ENCODE measurements at regions of chr2 and their contacts with region 1.

Region 1: DNA sequence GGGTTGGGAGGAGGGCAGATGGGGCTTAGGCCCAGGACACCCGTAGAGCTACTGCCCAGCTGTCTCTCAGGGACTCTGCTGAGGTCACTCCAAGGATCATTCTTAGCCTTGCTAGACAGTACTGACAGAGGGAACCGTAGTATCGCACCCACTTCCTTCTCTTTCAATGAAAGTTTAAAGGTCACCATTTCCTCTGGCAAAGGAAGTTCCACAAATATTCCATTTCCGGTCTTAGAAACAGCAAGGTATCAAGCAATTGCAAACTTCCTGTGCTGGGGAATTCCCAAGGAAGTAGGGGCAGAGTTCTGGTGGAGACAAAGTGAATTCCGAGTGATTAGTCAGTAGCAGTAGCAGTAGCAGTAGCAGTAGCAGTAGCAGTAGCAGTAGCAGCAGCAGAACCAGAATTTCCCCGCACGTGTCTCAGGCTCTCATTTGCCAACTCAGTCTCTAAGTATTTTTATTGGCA is 24.7 kb downstream of the IL1B start:
- DNase-seq: no peak
- H3K4me3 ChIP-seq: no peak overlapping the region
- H3K27ac ChIP-seq: peak overlapping the region; percentile 63
- H3K4me1 ChIP-seq: peaks cover 27% of the 10 kb centered on the region
- H3K27me3 ChIP-seq: no peaks in the 10 kb centered on the region
- CTCF ChIP-seq: no peak

Region 2: DNA sequence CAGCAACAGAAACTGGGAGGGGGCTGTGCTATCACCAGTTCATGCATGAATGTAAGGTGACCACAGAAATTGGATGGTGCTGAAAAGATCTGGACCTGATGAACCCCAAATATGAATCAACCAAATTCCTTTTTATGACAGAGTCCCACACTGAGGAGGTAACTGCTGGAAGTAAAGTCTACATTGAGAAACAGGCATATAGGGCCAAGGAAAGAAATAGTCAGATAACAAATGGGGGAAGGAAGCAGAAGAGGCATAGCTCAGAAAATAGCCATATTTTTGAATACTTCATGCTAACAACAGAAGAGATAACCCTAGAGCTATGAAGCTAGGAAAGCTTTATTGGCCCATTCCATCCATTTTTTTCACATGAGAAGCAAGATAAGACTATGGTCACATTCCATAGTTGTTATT is 510.7 kb before region 1 on chr2:
- intact Hi-C with region 1: no loop called
- DNase-seq: no peak
- H3K4me3 ChIP-seq: no peak overlapping the region
- H3K27ac ChIP-seq: no peak overlapping the region
- H3K4me1 ChIP-seq: peaks cover 19% of the 10 kb centered on the region
- H3K27me3 ChIP-seq: no peaks in the 10 kb centered on the region
- CTCF ChIP-seq: no peak

Region 3: DNA sequence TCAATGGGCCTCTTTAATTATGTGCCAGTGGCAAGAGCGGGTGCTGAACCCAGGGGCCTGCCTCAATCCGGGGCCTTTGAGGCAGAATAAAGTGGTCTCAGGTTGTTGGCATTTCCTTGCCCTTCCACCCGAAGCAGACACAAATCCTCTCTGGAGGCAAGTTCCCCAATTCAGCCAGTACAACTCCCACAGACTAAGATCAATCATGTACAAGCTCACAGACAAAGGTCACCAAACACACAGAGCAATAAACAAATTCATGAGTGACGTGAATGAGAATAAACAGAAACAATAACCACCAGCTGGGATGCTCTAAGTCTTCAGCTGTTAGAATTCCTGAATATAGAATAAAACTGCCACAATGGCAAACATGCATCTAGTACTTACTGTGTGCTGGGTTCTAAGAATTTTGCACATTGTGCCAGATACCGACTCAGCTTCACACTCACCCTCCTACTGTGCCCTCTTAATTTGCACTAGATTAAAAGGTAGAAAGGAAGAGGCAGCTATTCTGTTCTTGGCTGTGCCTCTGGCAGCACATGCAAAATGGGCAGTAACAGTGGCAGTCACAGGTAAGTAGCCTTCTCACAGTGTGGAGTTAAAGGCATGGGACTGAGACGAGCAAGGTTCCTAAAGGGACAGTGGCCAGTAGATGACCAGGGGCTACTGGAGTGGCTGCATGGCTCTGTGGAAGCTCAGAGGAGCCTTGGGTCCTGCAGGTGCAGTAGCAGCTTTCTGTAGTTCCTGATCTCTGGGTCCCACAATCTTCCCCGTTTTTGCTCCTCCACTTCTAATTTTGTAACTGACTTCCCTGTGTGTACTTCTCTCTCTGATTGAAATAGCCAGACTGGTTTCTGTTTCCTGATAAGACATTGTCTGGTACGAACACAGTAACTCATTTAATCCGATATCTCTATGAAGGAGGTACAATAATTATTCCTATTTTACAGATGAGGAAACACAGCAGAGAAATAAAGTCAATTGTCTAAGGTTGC is 59.3 kb after region 1 on chr2:
- intact Hi-C with region 1: loop called (anchors 2 kb)
- DNase-seq: no peak
- H3K4me3 ChIP-seq: no peak overlapping the region
- H3K27ac ChIP-seq: no peak overlapping the region
- H3K4me1 ChIP-seq: peaks cover 16% of the 10 kb centered on the region
- H3K27me3 ChIP-seq: peaks cover 27% of the 10 kb centered on the region
- CTCF ChIP-seq: no peak

Region 4: GRCh38 chr2:113240150-113240862 is 428.4 kb after region 1 on chr2:
- intact Hi-C with region 1: no loop called
- DNase-seq: peak; percentile 90
- H3K4me3 ChIP-seq: peak overlapping the region; percentile 29
- H3K27ac ChIP-seq: peak overlapping the region; percentile 64
- H3K4me1 ChIP-seq: peaks cover 35% of the 10 kb centered on the region
- H3K27me3 ChIP-seq: no peaks in the 10 kb centered on the region
- CTCF ChIP-seq: no peak